ENCODE measurements at regions of chr15 and their contacts with region 1.

Region 1: GRCh38 chr15:60592371-60593169 is 113.6 kb upstream of the ICE2 start:
- DNase-seq: peak; percentile 74
- H3K4me3 ChIP-seq: peak overlapping the region; percentile 33 to 83 (median 49)
- H3K27ac ChIP-seq: peak overlapping the region; percentile 2
- H3K4me1 ChIP-seq: peaks cover 14% of the 10 kb centered on the region
- H3K27me3 ChIP-seq: no peaks in the 10 kb centered on the region
- CTCF ChIP-seq: peak; percentile 23 to 49
- POLR2A ChIP-seq: no peak

Region 2: GRCh38 chr15:60374628-60375081 is 217.9 kb before region 1 on chr15:
- CTCF ChIA-PET with region 1: no interaction called
- POLR2A ChIA-PET with region 1: no interaction called
- dilution Hi-C with region 1: no loop called
- intact Hi-C with region 1: no loop called
- DNase-seq: peak; percentile 98
- H3K4me3 ChIP-seq: no peak overlapping the region
- H3K27ac ChIP-seq: peak overlapping the region; percentile 98
- H3K4me1 ChIP-seq: peaks cover 85% of the 10 kb centered on the region
- H3K27me3 ChIP-seq: no peaks in the 10 kb centered on the region
- CTCF ChIP-seq: no peak
- POLR2A ChIP-seq: peak; percentile 72

Region 3: GRCh38 chr15:60568301-60568742 is 24.2 kb before region 1 on chr15:
- CTCF ChIA-PET with region 1: no interaction called
- POLR2A ChIA-PET with region 1: no interaction called
- dilution Hi-C with region 1: no loop called
- intact Hi-C with region 1: no loop called
- DNase-seq: no peak
- H3K4me3 ChIP-seq: no peak overlapping the region
- H3K27ac ChIP-seq: no peak overlapping the region
- H3K4me1 ChIP-seq: no peaks in the 10 kb centered on the region
- H3K27me3 ChIP-seq: no peaks in the 10 kb centered on the region
- CTCF ChIP-seq: no peak
- POLR2A ChIP-seq: no peak

Region 4: GRCh38 chr15:60644903-60645302 is 52.3 kb after region 1 on chr15:
- CTCF ChIA-PET with region 1: interaction called, 6 read pairs
- POLR2A ChIA-PET with region 1: interaction called, 4 read pairs
- dilution Hi-C with region 1: no loop called
- intact Hi-C with region 1: loop called (anchors 2 kb)
- DNase-seq: peak; percentile 87
- H3K4me3 ChIP-seq: no peak overlapping the region
- H3K27ac ChIP-seq: peak overlapping the region; percentile 46
- H3K4me1 ChIP-seq: peaks cover 23% of the 10 kb centered on the region
- H3K27me3 ChIP-seq: no peaks in the 10 kb centered on the region
- CTCF ChIP-seq: no peak
- POLR2A ChIP-seq: no peak

Region 5: GRCh38 chr15:60660290-60661051 is 67.9 kb after region 1 on chr15:
- CTCF ChIA-PET with region 1: no interaction called
- POLR2A ChIA-PET with region 1: no interaction called
- dilution Hi-C with region 1: no loop called
- intact Hi-C with region 1: no loop called
- DNase-seq: peak; percentile 67
- H3K4me3 ChIP-seq: no peak overlapping the region
- H3K27ac ChIP-seq: no peak overlapping the region
- H3K4me1 ChIP-seq: no peaks in the 10 kb centered on the region
- H3K27me3 ChIP-seq: no peaks in the 10 kb centered on the region
- CTCF ChIP-seq: no peak
- POLR2A ChIP-seq: no peak

Region 6: DNA sequence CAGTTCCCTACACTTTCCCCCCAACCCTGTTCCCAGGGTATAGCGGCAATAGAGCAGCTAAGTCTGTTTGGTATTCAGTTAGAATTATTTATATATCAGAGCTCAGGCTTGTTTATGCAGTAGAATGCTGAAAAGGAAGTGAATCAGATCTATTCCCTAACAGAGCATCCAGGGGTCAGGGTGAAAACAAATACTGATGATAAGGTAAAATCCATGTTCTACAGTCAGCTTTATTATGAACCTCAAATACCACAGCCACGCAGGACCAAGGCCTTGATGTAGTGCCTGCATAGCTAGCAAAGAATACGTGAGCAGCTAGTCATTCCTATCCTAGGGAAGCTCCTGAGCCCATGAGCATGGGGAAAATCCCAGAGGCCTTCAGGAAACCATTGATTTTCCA is 116.1 kb after region 1 on chr15:
- CTCF ChIA-PET with region 1: interaction called, 3 read pairs
- POLR2A ChIA-PET with region 1: no interaction called
- dilution Hi-C with region 1: no loop called
- intact Hi-C with region 1: loop called (anchors 2 kb)
- DNase-seq: peak; percentile 89
- H3K4me3 ChIP-seq: no peak overlapping the region
- H3K27ac ChIP-seq: peak overlapping the region; percentile 46
- H3K4me1 ChIP-seq: peaks cover 24% of the 10 kb centered on the region
- H3K27me3 ChIP-seq: no peaks in the 10 kb centered on the region
- CTCF ChIP-seq: no peak
- POLR2A ChIP-seq: no peak

Region 7: DNA sequence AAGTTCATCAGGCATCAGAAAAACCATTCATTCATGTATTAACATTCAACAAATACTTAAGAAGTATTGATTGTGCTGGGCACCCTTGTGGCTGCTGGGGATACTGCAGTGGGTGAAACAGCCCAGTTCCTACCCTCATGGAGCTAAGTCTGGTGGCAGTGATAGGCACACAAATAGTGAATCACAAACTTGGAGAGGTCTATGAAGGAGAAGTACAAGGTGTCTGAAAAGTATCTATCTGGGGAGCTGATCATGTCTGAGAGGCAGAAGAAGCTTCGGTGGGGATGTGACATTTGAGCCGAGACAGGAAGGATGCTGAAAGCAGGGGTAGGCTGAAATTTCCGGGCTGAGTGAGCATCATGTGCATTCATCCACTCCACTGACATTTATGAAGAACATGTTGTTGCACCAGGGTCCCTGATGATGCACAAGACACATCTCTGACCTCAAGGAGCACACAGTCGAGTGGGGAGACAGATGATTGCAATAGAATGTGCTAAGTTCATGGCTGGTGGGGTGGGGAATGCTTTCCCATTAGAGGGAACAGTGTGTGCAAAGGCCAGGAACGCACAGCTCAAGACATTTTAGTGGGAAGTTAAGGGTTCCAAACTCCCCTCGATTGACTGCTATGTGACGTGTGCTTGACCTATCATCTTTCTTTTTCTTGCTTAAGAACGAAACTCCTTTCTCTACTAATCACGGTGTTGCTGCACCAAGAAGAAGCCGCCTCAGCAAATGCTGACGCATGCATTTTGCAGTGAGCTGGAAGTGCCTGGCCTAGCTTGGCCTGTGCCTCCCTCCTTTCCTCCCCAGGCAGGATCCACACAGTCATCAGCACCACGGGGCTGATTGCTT is 195.5 kb after region 1 on chr15:
- CTCF ChIA-PET with region 1: interaction called, 16 read pairs
- POLR2A ChIA-PET with region 1: no interaction called
- dilution Hi-C with region 1: no loop called
- intact Hi-C with region 1: loop called (anchors 2 kb)
- DNase-seq: peak; percentile 31
- H3K4me3 ChIP-seq: no peak overlapping the region
- H3K27ac ChIP-seq: no peak overlapping the region
- H3K4me1 ChIP-seq: no peaks in the 10 kb centered on the region
- H3K27me3 ChIP-seq: no peaks in the 10 kb centered on the region
- CTCF ChIP-seq: peak; percentile 38 to 39
- POLR2A ChIP-seq: no peak

Region 8: DNA sequence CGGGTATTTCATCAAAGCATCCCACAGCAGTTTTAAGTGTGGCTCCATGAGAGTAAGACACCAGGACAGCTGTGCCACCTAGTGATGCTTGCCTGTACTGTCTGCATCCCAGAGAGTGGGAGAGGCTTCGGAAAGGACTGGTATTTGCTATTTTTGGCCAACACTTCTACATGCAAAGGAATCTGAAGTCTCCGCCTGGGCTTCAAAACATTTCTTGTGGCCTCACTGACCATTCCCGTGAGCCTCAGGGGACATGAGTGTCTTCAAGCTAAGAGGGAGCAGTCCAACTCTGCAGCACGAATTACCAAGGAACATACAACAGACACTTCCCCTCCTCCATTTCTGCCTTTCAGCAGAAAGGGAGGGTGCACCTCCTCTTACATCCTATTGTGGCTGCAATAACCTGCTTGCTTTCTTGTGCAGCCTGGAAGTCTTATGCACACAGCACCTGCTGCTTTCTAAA is 459.0 kb after region 1 on chr15:
- CTCF ChIA-PET with region 1: interaction called, 61 read pairs
- POLR2A ChIA-PET with region 1: no interaction called
- dilution Hi-C with region 1: no loop called
- intact Hi-C with region 1: no loop called
- DNase-seq: peak; percentile 70
- H3K4me3 ChIP-seq: no peak overlapping the region
- H3K27ac ChIP-seq: no peak overlapping the region
- H3K4me1 ChIP-seq: no peaks in the 10 kb centered on the region
- H3K27me3 ChIP-seq: no peaks in the 10 kb centered on the region
- CTCF ChIP-seq: peak; percentile 68 to 78
- POLR2A ChIP-seq: no peak

Measured in endothelial cell of umbilical vein (primary cell).